ENCODE measurements at regions of chr20 and their contacts with region 1.

Region 1: DNA sequence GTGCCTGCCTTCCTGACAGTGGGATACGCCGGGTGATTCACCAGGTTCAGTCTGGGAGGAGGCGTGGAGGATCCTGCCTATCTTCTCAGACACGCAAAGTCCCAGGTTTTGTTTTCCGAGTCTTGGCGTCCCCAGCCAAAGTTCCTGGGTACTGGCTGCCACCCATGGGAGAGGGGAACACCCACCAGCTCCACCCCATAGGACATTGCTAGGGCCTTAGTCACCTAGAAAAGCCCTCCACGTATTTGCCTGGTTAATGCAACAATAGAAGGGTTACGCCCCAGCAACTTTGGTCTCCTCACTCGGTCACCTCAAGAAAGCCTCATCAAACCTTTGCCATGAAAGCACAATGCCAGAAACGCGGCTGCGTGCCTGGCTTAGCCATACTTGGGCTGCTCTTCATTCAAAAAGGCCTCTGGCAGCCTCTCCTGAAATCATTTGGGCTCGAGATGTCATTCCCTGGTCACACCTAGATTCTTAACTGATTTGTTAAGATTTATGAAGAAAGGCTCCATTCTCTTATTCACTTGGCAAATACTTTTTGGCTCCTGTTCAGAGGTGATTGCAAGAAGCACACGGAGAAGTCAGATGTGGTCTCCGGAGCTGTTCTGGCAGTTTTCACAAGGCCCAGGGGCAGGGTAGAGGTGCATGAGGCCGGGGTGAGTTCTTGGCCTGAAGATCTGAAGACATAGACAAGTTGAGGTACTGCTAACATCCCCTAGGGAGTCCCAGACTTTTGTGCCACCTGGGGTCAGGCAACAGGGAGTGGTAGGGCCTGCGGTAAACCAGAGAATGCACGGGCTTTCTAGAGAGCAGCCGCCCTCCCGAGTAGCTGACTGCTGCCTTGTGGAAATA is 35.5 kb upstream of the ZNF133 start:
- DNase-seq: no peak
- ATAC-seq: peak; percentile 77

Region 2: GRCh38 chr20:17205084-17205813 is 1047.6 kb before region 1 on chr20:
- intact Hi-C with region 1: loop called (anchors 5 kb)
- DNase-seq: no peak
- ATAC-seq: no peak

Region 3: DNA sequence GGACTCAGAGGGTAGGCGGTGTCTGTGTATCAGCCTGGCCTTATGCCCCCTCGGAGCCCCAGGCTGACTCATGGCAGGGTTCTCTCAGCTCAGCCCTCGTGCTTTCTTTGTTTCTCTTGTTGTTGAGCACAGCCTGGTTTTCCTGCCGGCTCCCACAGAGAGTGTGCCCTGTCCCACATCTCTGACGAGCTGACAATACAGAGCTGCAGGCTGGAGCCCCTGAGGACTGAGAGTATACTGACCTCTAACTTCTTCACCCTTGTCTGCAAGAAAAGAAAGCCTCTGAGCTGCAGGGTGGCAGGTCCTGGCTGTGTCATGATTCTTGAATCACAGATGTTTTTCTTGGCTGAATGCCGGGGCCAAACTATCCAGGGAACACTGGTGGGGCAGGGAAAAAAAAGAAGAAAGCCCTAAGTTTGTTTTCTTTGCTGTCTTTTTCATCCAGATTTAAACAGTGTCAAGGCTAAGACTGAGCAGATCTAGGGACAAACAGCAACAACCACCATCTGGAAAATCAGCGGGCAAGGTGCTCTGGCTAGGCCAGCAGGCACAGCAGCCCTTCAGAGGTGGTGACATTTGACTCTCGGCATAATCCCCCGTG is 27.8 kb before region 1 on chr20:
- intact Hi-C with region 1: no loop called
- DNase-seq: peak; percentile 66
- ATAC-seq: peak; percentile 93

Measured in sciatic nerve (tissue), 2 donors.